ENCODE measurements at regions of chr6 and their contacts with region 1.

Region 1: GRCh38 chr6:53979468-53980067 is 131.7 kb upstream of the MLIP start:
- DNase-seq: peak; percentile 43
- H3K4me3 Mint-ChIP-seq: no peak overlapping the region
- H3K27ac Mint-ChIP-seq: no peak overlapping the region
- H3K4me1 Mint-ChIP-seq: peaks cover 37% of the 10 kb centered on the region
- H3K27me3 Mint-ChIP-seq: no peaks in the 10 kb centered on the region
- CTCF ChIP-seq: peak; percentile 72

Region 2: GRCh38 chr6:53375847-53376246 is 603.7 kb before region 1 on chr6:
- CTCF ChIA-PET with region 1: no interaction called
- intact Hi-C with region 1: no loop called
- DNase-seq: no peak
- H3K4me3 Mint-ChIP-seq: no peak overlapping the region
- H3K27ac Mint-ChIP-seq: no peak overlapping the region
- H3K4me1 Mint-ChIP-seq: no peaks in the 10 kb centered on the region
- H3K27me3 Mint-ChIP-seq: peaks cover 19% of the 10 kb centered on the region
- CTCF ChIP-seq: no peak

Region 3: DNA sequence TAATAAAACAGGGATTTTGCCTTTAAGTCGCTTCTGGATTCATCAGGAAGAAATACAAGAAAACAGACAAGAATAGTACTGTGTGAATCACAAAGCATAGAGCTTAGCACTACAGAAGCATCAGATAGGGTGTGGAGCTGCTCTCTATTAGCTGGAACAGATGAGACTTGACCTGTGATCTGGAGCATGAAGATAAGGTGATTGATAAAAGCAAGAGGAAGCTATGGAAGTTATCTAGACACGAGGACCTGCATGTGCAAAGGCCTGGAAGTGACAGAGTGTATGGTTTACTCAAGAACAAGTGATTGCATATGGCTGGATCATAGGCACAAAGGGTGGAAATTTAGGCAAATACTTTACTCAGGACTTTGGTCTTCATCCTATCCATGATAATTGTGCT is 18.7 kb after region 1 on chr6:
- CTCF ChIA-PET with region 1: no interaction called
- intact Hi-C with region 1: no loop called
- DNase-seq: no peak
- H3K4me3 Mint-ChIP-seq: no peak overlapping the region
- H3K27ac Mint-ChIP-seq: no peak overlapping the region
- H3K4me1 Mint-ChIP-seq: peaks cover 9% of the 10 kb centered on the region
- H3K27me3 Mint-ChIP-seq: no peaks in the 10 kb centered on the region
- CTCF ChIP-seq: no peak

Region 4: GRCh38 chr6:54135665-54136369 is 156.2 kb after region 1 on chr6:
- CTCF ChIA-PET with region 1: no interaction called
- intact Hi-C with region 1: loop called (anchors 5 kb)
- DNase-seq: no peak
- H3K4me3 Mint-ChIP-seq: peak overlapping the region; percentile 45
- H3K27ac Mint-ChIP-seq: peak overlapping the region; percentile 77
- H3K4me1 Mint-ChIP-seq: peaks cover 38% of the 10 kb centered on the region
- H3K27me3 Mint-ChIP-seq: no peaks in the 10 kb centered on the region
- CTCF ChIP-seq: no peak

Measured in Calu3 (cell line).